Activated naive CD4-positive, alpha-beta T cell treated with anti-CD3 and anti-CD28 coated beads for 36 hours (primary cell): ENCODE measurements at regions of chr3 and their contacts with region 1.

Region 1: DNA sequence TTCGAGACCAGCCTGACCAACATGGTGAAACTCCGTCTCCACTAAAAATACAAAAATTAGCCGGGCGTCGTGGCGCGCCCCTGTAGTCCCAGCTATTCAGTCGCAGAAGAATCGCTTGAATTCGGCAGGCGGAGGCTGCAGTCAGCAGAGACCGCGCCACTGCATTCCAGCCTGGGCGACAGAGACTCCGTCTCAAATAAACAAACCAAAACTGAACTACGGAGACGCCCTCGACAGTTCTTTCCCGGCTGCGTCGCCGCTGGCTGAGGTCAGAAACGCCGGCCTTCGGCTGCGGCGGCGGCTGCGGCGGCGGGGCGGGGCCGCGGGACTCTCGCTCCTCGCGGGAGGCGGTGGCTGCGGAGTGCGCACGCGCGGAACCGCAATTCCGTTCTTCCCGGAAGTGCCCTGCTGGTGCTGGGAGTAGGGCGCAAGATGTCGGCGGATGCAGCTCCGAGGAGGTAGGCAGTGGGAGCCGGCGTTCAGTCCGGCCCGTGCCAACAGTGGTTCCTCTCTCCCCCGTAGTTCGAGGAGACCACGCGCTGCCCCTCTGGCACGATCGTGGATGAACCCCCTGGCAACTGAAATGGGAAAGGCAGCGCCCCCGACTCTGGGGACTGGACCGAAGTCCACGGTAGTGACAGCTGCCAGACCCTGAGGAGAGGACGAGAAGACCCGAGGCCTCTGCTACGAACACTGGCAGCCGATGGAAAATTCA is 49.5 kb downstream of the TMEM44 start:
- DNase-seq: peak; percentile 94
- H3K4me3 Mint-ChIP-seq: peak overlapping the region; percentile 94
- H3K27ac Mint-ChIP-seq: peak overlapping the region; percentile 94
- H3K4me1 Mint-ChIP-seq: peaks cover 19% of the 10 kb centered on the region
- H3K27me3 Mint-ChIP-seq: no peaks in the 10 kb centered on the region

Region 2: DNA sequence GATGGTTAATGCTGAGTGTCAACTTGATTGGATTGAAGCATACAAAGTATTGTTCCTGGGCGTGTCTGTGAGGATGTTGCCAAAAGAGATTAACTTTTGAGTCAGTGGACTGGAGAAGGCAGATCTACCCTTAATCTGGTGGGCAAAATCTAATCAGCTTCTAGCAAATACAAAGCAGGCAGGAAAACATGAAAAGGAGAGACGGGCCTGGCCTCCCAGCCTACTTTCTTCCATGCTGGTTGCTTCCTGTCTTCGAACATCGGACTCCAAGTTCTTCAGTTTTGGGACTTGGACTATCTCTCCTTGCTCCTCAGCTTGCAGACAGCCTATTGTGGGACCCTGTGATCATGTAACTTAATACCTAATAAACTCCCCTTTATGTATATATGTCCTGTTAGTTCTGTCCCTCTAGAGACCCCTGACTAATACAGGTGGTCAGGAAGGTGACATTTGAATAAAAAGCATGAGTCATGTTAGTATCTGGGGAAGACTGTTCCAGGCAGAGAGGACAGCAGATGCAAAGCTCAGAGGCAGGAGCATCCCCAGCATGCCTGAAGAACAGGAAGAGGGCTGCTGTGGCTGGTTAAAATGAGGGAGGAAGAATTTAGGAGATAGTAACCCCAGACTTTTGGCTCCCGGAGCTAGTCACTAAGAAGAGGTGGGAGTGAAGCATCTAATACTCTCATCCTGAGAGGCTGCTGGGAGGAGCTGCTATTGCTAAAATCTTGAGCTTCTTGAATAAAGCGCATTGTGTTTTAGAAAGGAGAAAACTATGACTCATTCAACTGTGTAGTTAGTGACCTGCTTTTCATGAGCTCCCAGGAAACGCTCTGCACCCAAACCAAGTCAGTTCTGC is 655.2 kb before region 1 on chr3:
- CTCF ChIA-PET with region 1: no interaction called
- intact Hi-C with region 1: no loop called
- DNase-seq: no peak
- H3K4me3 Mint-ChIP-seq: no peak overlapping the region
- H3K27ac Mint-ChIP-seq: no peak overlapping the region
- H3K4me1 Mint-ChIP-seq: no peaks in the 10 kb centered on the region
- H3K27me3 Mint-ChIP-seq: peaks cover 6% of the 10 kb centered on the region

Region 3: DNA sequence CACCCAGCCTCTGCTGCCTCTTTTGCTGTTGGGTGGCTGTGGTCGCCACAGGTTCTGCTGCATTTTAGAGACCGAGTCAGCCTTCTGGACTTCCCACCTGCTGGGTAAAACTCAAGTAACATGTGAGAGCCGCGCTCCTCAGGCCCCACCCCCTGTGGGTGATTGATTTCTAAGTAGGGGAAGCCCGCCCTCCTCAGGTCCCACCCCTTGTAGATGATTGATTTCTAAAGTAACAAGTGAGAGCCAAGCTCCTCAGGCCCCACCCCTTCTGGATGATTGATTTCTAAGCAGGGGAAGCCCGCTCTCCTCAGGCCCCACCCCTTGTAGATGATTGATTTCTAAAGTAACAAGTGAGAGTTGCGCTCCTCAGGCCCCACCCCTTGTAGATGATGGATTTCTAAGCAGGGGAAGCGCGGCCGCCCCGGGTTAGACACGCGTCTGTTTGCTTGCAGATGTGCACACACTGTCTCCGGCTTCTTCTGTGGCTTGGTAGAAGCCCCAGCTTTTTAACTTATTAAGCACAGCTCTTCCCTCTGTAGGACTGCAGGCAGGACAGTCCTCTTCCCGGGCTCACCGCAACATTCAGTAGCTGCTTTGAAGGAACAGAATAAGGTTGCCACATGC is 185.4 kb after region 1 on chr3:
- CTCF ChIA-PET with region 1: no interaction called
- intact Hi-C with region 1: loop called (anchors 2 kb)
- DNase-seq: peak; percentile 99
- H3K4me3 Mint-ChIP-seq: peak overlapping the region; percentile 70
- H3K27ac Mint-ChIP-seq: peak overlapping the region; percentile 66
- H3K4me1 Mint-ChIP-seq: peaks cover 11% of the 10 kb centered on the region
- H3K27me3 Mint-ChIP-seq: no peaks in the 10 kb centered on the region